Mammary epithelial cell (primary cell): ENCODE measurements at regions of chr10 and their contacts with region 1.

Region 1: DNA sequence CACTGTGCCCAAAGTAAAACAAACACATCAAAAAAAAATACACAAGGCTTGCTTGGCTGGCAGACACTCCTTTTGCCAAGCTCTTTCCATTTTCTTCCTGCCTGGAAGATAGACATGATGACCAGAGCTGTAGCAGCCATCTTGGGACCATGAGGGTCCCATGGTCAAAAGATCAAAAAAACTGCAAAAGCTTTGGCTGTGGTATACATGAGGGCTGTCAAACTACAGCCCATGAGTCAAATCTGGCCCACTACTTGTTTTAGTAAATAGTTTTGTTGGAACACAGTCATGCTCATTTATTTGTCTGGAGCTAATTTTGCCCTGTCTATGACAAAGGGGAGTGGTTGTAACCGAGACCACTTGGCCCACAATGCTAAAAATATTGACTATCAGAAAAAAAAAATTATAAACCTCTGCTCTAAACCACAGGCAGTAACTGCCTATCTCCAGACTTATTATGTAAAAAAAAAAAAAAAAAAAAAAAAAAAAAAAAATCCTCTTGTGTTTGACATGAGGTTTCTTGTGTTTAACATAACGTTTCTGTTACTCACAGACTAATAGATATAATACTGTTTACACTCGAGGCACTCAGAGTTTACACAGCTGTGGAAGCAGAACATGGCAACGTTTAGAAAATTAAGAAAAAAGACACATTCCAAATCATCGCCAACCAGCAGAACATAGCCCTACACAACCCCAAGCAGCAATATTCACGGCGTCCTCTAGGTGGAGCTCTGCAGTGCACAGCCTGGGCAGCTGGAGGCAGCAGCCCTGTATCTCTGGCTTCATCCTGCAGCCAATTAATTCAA is 36.9 kb downstream of the ASB13 start:
- DNase-seq: peak; percentile 57
- H3K4me3 ChIP-seq: no peak overlapping the region
- H3K27ac ChIP-seq: no peak overlapping the region
- H3K4me1 ChIP-seq: peaks cover 13% of the 10 kb centered on the region
- H3K27me3 ChIP-seq: no peaks in the 10 kb centered on the region
- CTCF ChIP-seq: peak; percentile 94 to 97

Region 2: DNA sequence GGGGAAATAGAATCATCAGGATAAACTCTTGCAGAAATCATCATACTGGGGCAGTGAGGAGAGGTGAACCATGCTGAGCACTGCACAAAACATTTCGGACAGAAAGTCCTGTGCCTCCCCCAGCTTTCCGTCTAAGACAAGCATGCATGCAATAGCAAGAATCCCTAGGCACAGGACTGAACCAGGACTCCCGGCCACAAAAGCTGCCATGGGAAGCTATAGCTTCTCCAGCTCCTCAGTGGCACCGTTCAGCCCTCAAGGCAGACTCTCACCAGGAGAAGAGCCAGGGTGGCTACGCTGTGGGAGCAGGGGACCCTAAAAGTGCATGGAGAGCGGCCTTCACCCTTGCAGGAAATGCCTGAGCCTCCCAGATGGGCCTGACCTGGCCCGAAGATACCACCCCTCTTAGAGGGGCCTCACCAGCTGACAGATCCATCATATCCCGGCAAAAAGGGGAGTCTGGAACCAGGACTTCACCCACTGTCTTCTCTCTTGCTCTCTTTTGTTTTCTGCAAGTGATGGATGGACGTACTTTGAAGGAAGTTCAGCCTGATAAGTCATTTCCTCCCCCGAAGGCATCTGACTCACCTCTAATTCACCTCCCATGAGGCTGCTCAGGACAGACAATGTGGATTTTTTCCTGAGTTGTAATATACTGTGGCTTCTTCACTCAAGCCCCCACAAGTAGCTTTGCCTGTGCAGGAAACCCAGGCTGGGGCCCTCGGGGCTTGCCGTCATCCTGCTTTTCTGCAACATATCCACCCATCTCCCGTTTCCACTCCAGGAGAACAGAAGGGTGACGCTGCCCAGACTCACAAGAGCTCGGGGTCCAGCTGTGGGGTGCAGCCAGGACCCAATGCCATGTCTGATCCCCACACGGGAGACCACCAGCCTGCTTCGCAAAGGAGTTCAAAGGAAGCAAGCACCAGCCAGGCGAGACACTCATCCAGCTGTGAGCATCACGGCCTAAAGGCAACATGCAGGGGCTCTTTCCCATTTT is 33.6 kb before region 1 on chr10:
- CTCF ChIA-PET with region 1: no interaction called
- dilution Hi-C with region 1: loop called (anchors 5 kb)
- in situ Hi-C with region 1: no loop called
- intact Hi-C with region 1: no loop called
- DNase-seq: peak; percentile 99
- H3K4me3 ChIP-seq: peak overlapping the region; percentile 12 to 36 (median 30)
- H3K27ac ChIP-seq: peak overlapping the region; percentile 90
- H3K4me1 ChIP-seq: peaks cover 31% of the 10 kb centered on the region
- H3K27me3 ChIP-seq: no peaks in the 10 kb centered on the region
- CTCF ChIP-seq: no peak

Region 3: DNA sequence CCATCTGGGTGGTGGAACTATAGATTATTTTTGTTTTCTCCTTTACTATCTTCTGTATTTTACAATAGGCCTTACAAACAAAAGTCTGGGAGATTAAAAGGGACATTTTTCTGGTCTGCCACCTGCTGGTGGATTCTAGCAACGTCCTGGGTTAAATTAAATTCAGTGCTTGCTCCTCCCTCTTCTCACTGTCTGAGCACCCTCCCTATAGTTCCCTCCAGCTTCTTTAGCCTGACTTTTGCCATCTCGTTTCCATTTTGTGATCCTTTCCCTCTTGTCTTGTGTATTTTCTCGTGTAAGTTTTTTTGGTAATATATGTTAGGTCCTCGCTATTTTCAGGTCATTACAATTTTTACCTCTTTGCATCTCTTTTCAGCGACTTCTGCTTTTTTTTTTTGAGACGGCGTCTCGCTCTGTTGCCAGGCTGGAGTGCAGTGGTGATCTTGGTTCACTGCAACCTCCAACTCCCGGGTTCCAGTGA is 244.0 kb after region 1 on chr10:
- CTCF ChIA-PET with region 1: no interaction called
- dilution Hi-C with region 1: no loop called
- in situ Hi-C with region 1: no loop called
- intact Hi-C with region 1: loop called (anchors 1 kb)
- DNase-seq: peak; percentile 57
- H3K4me3 ChIP-seq: no peak overlapping the region
- H3K27ac ChIP-seq: no peak overlapping the region
- H3K4me1 ChIP-seq: no peaks in the 10 kb centered on the region
- H3K27me3 ChIP-seq: no peaks in the 10 kb centered on the region
- CTCF ChIP-seq: peak; percentile 62 to 65